Calu3 (cell line): ENCODE measurements at regions of chr16 and their contacts with region 1.

Region 1: DNA sequence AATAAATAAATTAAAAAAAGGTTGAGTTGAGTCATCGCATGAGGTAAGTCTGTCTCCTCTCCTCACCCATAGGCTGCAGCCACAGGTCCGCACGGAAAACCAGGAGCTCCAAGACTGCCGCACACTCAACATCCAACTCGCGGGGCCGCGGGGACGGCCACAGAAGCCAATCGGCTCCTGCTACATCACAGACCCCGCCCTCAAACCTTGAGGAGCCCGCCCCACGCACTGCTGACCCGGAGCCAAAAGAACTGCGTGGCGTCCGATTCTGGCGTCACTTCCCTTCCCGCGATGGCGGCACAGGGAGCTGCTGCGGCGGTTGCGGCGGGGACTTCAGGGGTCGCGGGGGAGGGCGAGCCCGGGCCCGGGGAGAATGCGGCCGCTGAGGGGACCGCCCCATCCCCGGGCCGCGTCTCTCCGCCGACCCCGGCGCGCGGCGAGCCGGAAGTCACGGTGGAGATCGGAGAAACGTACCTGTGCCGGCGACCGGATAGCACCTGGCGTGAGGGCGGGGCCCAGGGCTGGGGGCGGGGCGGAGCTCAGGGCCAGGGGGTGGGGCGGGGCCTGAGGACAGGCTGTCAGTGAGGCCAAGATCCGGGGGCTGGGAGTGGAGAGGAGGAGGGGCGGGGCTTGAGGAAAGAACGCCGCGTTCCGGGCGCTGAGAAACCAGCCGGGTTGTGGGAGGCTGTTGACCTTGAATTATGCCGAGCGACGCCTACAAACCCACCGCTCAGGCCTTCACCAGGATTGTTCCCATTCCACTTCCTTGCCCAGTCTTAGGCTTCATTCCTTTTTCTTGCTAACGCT is at the start of gene KAT8:
- DNase-seq: peak; percentile 99
- H3K4me3 Mint-ChIP-seq: peak within 1 kb of the TSS; percentile 88
- H3K27ac Mint-ChIP-seq: peak within 1 kb of the TSS; percentile 87
- H3K4me1 Mint-ChIP-seq: peaks cover 30% of the 10 kb centered on the region
- H3K27me3 Mint-ChIP-seq: no peaks in the 10 kb centered on the region
- CTCF ChIP-seq: no peak
- total RNA-seq, gene KAT8: 66.6 and 69.9 TPM in 2 replicates

Region 2: DNA sequence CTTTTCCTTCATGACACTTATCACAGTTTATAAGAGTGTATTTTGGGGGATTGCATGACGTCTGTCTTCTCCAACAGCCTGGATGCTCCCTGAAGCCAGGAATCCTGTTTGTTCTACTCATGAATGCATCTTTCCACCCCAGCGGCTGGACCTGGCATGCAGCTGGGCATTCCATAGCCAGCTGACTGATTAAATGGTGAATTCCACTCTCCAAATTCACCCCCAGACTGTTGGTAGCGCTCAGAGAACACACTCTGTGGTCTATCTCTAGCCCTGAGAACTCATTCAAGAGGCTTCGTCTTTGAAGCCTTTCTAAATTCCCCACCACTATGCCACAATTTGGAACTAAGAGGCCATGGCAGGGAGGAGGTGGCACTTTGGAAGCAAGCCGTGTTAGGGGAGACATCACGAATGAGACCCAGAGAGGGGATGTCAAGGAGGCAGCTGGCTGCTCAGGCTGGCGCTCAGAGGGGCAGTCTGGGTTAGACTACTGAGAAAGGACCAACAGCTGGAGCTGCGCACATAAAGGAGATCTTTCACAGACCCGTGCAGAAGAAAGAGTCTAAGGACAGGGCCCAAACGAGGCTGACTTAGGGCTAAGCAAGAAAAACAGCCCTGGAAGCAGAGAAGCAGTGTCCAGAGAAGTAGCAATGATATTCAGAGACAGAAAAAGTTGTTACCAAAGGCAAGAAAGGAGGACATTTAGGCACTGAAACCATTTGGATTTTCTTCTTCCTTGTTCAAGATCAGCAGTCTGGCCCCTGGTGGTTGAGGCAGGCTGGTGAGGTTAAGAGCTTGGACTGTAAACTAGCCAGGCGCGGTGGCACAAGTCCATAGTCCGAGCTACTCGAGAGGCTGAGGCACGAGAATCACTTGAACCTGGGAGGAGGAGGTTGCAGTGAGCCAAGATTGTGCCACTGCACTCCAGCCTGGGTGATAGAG is 288.2 kb before region 1 on chr16:
- CTCF ChIA-PET with region 1: no interaction called
- intact Hi-C with region 1: no loop called
- DNase-seq: peak; percentile 35
- H3K4me3 Mint-ChIP-seq: no peak overlapping the region
- H3K27ac Mint-ChIP-seq: no peak overlapping the region
- H3K4me1 Mint-ChIP-seq: peaks cover under 1% of the 10 kb centered on the region
- H3K27me3 Mint-ChIP-seq: peaks cover 47% of the 10 kb centered on the region
- CTCF ChIP-seq: no peak

Region 3: DNA sequence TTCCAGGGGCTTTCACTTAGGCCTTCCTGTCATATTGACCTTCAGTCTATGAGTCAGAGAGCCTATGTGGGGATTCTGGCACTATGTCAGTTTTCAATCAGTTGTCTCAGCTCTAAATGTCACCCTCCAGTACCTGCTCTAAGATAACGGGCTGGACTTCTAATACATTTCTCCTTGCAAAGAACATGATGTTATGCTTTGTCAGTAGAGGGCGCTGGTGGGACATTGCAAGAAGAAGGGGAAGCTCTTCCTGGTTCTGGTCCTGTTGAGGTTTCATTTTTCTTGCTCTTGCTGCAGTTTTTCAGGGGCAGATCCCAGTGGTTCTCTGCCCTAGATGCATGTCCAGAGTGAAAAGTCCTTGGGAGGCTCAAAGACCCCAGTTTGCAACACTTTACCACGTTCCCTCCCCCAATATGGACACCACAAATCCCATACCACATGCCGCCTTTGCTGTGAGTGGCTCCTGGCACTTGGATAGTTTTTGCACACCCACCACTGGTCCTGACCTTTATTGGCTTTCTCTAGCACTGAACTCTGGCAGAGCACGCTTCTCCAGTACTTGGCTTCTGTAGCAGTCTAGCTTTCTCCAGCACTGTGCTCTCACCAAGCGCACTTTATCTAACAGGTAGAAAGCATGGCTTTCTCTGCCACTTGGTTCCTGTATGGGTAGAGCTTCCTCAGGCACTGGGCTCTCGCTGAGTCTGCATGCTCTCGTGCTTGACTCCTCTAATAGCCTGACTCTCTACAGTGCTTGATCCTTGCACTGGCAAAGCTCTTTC is 272.7 kb before region 1 on chr16:
- CTCF ChIA-PET with region 1: no interaction called
- intact Hi-C with region 1: no loop called
- DNase-seq: peak; percentile 91
- H3K4me3 Mint-ChIP-seq: peak overlapping the region; percentile 24
- H3K27ac Mint-ChIP-seq: no peak overlapping the region
- H3K4me1 Mint-ChIP-seq: peaks cover 14% of the 10 kb centered on the region
- H3K27me3 Mint-ChIP-seq: no peaks in the 10 kb centered on the region
- CTCF ChIP-seq: peak; percentile 86

Region 4: DNA sequence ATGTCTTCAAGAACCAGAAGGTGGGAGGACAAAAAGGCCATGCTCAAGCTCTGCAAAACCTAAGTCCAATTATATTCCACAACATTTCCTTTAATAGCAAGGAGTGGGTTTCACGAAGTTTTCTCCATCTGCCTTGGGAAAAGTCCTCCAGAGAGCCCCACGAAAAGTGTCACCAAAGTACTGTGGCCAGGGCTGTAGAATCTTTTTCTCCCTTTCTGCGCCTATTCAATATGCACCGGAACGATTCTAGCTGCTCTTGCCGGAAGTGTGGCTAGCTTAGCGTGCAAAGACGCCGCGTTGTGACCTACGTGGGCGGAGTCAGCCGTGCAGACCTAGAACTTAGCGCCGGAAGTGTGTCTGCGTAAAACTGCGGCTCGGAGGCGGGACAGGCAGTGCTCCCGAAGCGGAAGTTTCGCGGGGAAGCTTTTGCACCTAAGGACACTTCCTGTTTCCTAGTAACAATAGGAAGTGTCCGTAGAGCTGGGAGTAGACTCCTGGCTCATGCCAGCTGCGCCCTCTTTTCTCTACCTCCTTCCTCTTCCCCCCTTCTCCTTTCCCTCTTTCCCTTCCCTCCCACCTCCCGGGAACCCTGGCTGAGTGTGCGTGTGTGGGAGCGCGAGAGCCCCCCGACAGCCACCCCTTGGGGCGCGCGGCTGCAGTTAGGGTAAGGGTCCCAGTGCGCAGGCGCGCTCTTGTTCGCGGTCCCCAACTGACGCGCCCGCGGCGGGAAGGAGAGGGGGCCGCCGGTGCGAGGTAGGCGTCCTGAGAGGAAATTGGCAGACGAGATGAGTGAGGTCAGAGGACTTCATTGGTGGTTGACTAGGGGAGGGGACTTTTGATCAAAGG is 43.4 kb before region 1 on chr16 and contains the starts of genes ZNF646 and ZNF668:
- CTCF ChIA-PET with region 1: no interaction called
- intact Hi-C with region 1: loop called (anchors 1 kb)
- DNase-seq: peak; percentile 98
- H3K4me3 Mint-ChIP-seq: peak within 1 kb of the TSS; percentile 88
- H3K27ac Mint-ChIP-seq: peak within 1 kb of the TSS; percentile 89
- H3K4me1 Mint-ChIP-seq: peaks cover 26% of the 10 kb centered on the region
- H3K27me3 Mint-ChIP-seq: no peaks in the 10 kb centered on the region
- CTCF ChIP-seq: no peak
- total RNA-seq, gene ZNF646: 34.4 and 34.9 TPM in 2 replicates
- total RNA-seq, gene ZNF668: 12.5 and 13.0 TPM in 2 replicates

Region 5: GRCh38 chr16:31094424-31095120 is 23.0 kb before region 1 on chr16 and contains the start of gene VKORC1:
- CTCF ChIA-PET with region 1: interaction called, 11 read pairs
- intact Hi-C with region 1: no loop called
- DNase-seq: peak; percentile 97
- H3K4me3 Mint-ChIP-seq: peak within 1 kb of the TSS; percentile 89
- H3K27ac Mint-ChIP-seq: peak within 1 kb of the TSS; percentile 82
- H3K4me1 Mint-ChIP-seq: peaks cover 12% of the 10 kb centered on the region
- H3K27me3 Mint-ChIP-seq: no peaks in the 10 kb centered on the region
- CTCF ChIP-seq: no peak
- total RNA-seq, gene VKORC1: 80.1 and 86.8 TPM in 2 replicates

Region 6: GRCh38 chr16:31099860-31100638 is 17.5 kb before region 1 on chr16:
- CTCF ChIA-PET with region 1: interaction called, 10 read pairs
- intact Hi-C with region 1: no loop called
- DNase-seq: no peak
- H3K4me3 Mint-ChIP-seq: no peak overlapping the region
- H3K27ac Mint-ChIP-seq: no peak overlapping the region
- H3K4me1 Mint-ChIP-seq: peaks cover 12% of the 10 kb centered on the region
- H3K27me3 Mint-ChIP-seq: no peaks in the 10 kb centered on the region
- CTCF ChIP-seq: no peak

Region 7: GRCh38 chr16:31128711-31129567 is 11.3 kb after region 1 on chr16:
- CTCF ChIA-PET with region 1: interaction called, 26 read pairs
- intact Hi-C with region 1: loop called (anchors 2 kb)
- DNase-seq: peak; percentile 70
- H3K4me3 Mint-ChIP-seq: peak overlapping the region; percentile 51
- H3K27ac Mint-ChIP-seq: peak overlapping the region; percentile 93
- H3K4me1 Mint-ChIP-seq: peaks cover 68% of the 10 kb centered on the region
- H3K27me3 Mint-ChIP-seq: no peaks in the 10 kb centered on the region
- CTCF ChIP-seq: no peak

Region 8: DNA sequence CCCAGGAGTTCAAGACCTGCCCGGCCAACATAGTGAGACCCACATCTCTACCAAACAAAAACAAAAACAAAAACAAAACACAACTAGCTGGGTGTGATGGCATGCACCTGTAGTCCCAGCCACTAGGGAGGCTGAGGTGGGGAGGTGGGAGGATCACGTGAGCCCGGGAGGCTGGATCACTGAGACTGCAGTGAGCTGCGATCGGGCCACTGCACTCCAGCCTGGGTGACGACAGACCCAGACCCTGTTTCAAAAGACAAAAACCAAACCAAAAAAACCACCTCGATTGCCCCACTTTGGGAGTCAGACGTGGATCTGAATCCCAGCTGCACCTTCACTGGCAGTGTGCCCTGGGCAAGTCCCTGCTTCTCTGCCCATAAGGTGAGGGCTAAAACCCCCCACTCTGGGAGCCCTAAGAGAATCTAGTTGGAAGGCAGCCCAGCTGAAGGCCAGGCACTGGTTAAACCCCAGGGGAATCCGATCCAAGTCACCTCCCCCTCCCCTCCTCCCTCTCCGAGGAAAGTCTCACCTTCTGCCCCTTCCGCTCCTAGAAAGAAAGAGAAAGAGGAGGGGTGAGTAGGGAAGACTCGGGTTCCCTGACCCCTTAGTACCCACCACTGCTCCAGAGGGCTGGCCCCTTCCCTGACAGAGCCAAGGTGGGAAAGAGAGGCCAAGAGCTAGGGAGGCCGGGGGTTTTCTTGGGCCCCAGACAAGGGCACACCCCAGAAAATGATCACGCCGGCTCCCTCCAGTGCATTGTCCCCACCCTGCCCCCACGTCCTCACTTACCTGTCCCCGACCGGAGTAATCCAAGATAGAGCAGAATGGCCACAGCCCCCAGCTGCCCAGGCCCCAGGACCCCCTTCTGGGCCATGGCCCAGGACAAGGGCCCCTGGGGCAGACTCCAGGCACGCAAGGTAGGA is 17.3 kb after region 1 on chr16:
- CTCF ChIA-PET with region 1: interaction called, 26 read pairs
- intact Hi-C with region 1: loop called (anchors 2 kb)
- DNase-seq: peak; percentile 79
- H3K4me3 Mint-ChIP-seq: peak overlapping the region; percentile 93
- H3K27ac Mint-ChIP-seq: peak overlapping the region; percentile 6
- H3K4me1 Mint-ChIP-seq: peaks cover 74% of the 10 kb centered on the region
- H3K27me3 Mint-ChIP-seq: no peaks in the 10 kb centered on the region
- CTCF ChIP-seq: no peak